Right ventricle myocardium superior (tissue), 1 donor: ENCODE measurements at regions of chr4 and their contacts with region 1.

Region 1: DNA sequence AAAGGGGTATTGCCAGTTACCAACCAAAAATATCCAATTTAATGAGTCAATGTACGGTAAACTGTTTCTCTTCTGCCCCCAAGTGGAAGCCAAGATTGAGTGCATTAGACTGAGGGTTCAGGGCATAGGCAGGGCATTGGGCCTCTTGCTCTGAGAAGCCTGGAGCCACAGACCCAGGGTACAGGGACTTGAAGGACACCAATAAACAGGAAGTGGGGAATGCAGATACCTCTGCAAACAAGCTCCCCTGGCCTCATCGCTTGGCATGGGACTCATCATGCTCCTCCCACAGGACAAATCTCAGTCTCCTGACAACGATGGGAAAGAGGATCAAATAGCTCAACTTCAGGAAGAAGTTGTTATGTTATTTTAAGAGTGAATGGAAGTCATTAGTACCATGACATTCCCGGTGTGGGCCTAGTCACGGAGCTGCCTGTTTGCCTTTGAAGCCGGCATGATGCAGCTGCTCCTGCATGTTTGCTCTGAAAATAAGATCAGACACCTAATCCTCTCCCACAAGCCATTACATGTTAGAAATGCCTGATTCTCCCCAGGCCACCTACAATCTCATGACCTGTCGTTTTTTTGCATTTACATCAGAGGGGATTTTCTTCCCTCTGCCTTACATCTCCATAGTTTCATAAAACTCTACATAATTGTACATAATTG is 224.2 kb downstream of the RCHY1 start:
- DNase-seq: no peak
- ATAC-seq: no peak

Region 2: GRCh38 chr4:74932816-74933561 is 357.1 kb before region 1 on chr4 and contains the start of gene PARM1:
- intact Hi-C with region 1: loop called (anchors 10 kb)
- DNase-seq: peak; percentile 93
- ATAC-seq: peak; percentile 98
- total RNA-seq, gene PARM1: 65.2 TPM

Region 3: GRCh38 chr4:75071317-75071716 is 218.7 kb before region 1 on chr4:
- intact Hi-C with region 1: no loop called
- DNase-seq: no peak
- ATAC-seq: no peak